ENCODE measurements at regions of chr1 and their contacts with region 1.

Region 1: GRCh38 chr1:2205191-2205952 is 10.8 kb upstream of the FAAP20 start:
- DNase-seq: peak; percentile 86
- ATAC-seq: peak; percentile 93
- H3K4me3 Mint-ChIP-seq: peak overlapping the region; percentile 72
- H3K27ac Mint-ChIP-seq: no peak overlapping the region
- H3K4me1 Mint-ChIP-seq: peaks cover 29% of the 10 kb centered on the region
- H3K27me3 Mint-ChIP-seq: no peaks in the 10 kb centered on the region
- CTCF ChIP-seq: no peak

Region 2: DNA sequence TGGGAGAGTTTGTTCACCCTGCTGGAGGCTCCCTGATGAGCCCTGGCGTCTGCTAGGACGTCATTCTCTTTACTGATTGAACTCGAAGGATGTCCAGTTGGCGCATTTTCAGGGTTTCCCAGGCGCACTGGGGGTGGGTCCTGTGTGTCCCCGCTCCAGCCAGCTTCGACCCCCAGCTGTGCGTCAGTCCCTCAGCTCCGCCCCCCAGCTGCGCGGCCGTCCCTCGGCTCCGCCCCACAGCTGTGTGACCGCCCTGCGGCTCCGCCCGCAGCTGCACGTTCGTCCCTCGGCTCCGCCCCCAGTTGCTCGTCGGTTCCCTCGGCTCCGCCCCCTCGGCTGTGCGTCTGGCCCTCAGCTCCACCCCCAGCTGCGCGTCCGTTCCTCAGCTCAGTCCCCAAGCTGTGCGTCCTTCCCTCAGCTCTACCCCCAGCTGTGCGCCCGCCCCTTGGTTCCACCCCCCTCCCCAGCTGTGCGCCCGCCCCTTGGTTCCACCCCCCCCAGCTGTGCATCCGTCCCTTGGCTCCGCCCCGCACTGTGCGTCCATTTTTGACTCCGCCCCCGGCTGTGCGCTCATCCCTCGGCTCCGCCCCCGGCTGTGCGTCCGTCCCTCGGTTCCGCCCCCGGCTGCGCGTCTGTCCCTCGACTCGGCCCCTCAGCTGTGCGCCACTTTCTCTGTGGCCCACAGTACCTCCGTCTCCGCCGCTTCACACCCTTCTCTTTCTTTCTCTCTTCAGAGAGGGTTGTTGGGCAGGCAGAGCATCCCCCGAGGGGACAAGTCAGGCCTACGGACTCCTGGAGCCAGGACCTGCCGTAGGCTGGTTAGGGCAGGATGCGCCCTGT is 72.1 kb before region 1 on chr1:
- CTCF ChIA-PET with region 1: no interaction called
- POLR2A ChIA-PET with region 1: no interaction called
- intact Hi-C with region 1: loop called (anchors 1 kb)
- DNase-seq: peak; percentile 97
- ATAC-seq: peak; percentile 90
- H3K4me3 Mint-ChIP-seq: peak overlapping the region; percentile 80
- H3K27ac Mint-ChIP-seq: peak overlapping the region; percentile 75
- H3K4me1 Mint-ChIP-seq: peaks cover 14% of the 10 kb centered on the region
- H3K27me3 Mint-ChIP-seq: no peaks in the 10 kb centered on the region
- CTCF ChIP-seq: no peak

Region 3: DNA sequence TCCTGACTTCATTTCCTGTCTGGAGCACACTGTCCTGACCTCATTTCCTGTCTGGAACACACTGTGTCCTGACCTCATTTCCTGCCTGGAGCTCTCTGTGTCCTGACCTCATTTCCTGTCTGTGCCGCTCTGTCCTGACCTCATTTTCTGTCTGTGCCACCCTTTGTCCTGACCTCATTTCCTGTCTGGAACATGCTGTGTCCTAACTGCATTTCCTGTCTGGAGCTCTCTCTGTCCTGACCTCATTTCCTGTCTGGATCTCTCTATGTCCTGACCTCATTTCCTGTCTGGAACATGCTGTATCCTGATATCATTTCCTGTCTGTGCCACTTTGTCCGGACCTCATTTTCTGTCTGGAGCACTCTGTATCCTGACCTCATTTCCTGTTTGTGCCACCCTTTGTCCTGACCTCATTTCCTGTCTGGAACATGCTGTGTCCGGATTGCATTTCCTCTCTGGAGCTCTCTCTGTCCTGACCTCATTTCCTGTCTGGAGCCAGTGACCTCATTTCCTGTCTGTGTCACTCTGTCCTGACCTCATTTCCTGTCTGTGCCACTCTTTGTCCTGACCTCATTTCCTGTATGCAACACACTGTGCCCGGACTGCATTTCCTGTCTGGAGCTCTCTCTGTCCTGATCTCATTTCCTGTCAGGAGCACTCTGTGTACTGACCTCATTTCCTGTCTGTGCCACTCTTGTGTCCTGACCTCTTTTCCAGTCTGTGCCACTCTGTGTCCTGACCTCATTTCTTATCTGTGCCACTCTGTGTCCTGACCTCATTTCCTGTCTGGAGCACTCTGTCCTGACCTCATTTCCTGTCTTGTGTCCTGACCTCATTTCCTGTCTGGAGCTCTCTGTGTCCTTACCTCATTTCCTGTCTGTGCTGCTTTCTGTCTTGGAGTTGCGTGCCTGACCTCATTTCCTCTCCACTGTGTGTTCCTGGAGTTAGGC is 50.3 kb after region 1 on chr1:
- CTCF ChIA-PET with region 1: no interaction called
- POLR2A ChIA-PET with region 1: no interaction called
- intact Hi-C with region 1: loop called (anchors 10 kb)
- DNase-seq: peak; percentile 45
- ATAC-seq: peak; percentile 58
- H3K4me3 Mint-ChIP-seq: no peak overlapping the region
- H3K27ac Mint-ChIP-seq: no peak overlapping the region
- H3K4me1 Mint-ChIP-seq: peaks cover 60% of the 10 kb centered on the region
- H3K27me3 Mint-ChIP-seq: no peaks in the 10 kb centered on the region
- CTCF ChIP-seq: no peak

Region 4: GRCh38 chr1:2391041-2391930 is 185.9 kb after region 1 on chr1 and contains the starts of genes MORN1 and RER1:
- CTCF ChIA-PET with region 1: no interaction called
- POLR2A ChIA-PET with region 1: interaction called, 14 read pairs
- intact Hi-C with region 1: no loop called
- DNase-seq: peak; percentile 96
- ATAC-seq: peak; percentile 94
- H3K4me3 Mint-ChIP-seq: peak within 1 kb of the TSS; percentile 88
- H3K27ac Mint-ChIP-seq: peak within 1 kb of the TSS; percentile 68
- H3K4me1 Mint-ChIP-seq: peaks cover 52% of the 10 kb centered on the region
- H3K27me3 Mint-ChIP-seq: no peaks in the 10 kb centered on the region
- CTCF ChIP-seq: no peak
- total RNA-seq, gene MORN1: 15.6 and 17.8 TPM in 2 replicates
- total RNA-seq, gene RER1: 102 and 105 TPM in 2 replicates

Region 5: DNA sequence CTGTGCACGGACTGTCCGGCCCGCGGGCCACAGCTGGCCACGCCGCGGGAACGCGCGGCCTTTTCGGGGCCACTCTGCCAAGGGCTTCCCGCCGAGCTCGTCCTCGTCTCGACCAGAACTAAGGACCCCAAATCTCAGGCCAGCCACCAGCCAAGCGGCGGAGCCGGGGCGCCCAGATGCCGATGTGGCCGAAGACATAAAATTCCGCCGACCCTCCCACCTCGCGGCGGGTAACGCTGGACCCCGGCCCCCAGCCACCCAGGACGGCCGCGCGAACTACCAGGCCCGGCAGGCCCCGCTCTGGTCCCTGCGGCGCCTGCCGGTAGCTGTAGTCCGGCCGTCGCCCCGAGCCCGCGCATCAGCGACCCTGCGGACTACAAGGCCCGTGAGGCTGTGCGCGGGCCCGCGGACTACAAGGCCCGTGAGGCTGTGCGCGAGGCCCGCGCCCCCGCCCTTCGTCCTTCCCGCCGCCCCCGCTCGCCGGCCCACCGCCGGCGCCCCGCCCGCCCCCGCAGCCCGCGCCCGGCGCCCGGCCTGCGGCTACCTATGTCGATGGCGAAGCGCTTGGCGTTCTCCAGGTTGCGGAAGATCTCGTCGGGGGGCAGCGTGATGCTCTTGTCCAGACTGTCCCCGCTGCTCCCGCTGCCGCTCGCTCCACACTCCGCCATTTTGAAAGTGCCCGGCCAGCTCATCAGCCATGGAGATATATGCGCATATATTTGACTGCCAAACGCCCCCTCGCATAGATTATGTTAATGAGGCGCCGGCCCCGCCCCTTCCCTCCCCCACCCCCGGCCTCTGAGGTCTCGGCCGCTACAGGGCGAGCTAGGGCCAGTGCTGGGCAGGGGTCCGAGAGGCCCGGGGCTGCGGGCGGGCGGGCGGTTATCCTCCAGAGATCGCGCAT is 320.8 kb after region 1 on chr1 and contains the start of gene PANK4:
- CTCF ChIA-PET with region 1: no interaction called
- POLR2A ChIA-PET with region 1: no interaction called
- intact Hi-C with region 1: loop called (anchors 1 kb)
- DNase-seq: peak; percentile 90
- ATAC-seq: peak; percentile 93
- H3K4me3 Mint-ChIP-seq: peak within 1 kb of the TSS; percentile 96
- H3K27ac Mint-ChIP-seq: peak within 1 kb of the TSS; percentile 96
- H3K4me1 Mint-ChIP-seq: peaks cover 45% of the 10 kb centered on the region
- H3K27me3 Mint-ChIP-seq: peaks cover 3% of the 10 kb centered on the region
- CTCF ChIP-seq: no peak
- total RNA-seq, gene PANK4: 43.1 and 54.0 TPM in 2 replicates

Measured in activated B cell treated with CpG ODN at 0.5 μM for 24 hours (primary cell).